HCT116 (cell line): ENCODE measurements at regions of chrX and their contacts with region 1.

Region 1: GRCh38 chrX:123779908-123780396 is 47.1 kb upstream of the THOC2 start:
- DNase-seq: no peak
- ATAC-seq: no peak
- H3K4me3 ChIP-seq: no peak overlapping the region
- H3K27ac ChIP-seq: no peak overlapping the region
- H3K4me1 ChIP-seq: peaks cover 2 to 17% of the 10 kb centered on the region in 2 experiments; a peak in 3 of 4 replicates
- H3K27me3 ChIP-seq: no peaks in the 10 kb centered on the region
- CTCF ChIP-seq: no peak
- POLR2A ChIP-seq: no peak
- RAD21 ChIP-seq: no peak

Region 2: GRCh38 chrX:123698979-123699520 is 80.9 kb before region 1 on chrX:
- CTCF ChIA-PET with region 1: no interaction called
- POLR2A ChIA-PET with region 1: no interaction called
- RAD21 ChIA-PET with region 1: no interaction called
- intact Hi-C with region 1: no loop called
- DNase-seq: no peak
- ATAC-seq: no peak
- H3K4me3 ChIP-seq: no peak overlapping the region
- H3K27ac ChIP-seq: no peak overlapping the region
- H3K4me1 ChIP-seq: no peaks in the 10 kb centered on the region
- H3K27me3 ChIP-seq: no peaks in the 10 kb centered on the region
- CTCF ChIP-seq: no peak
- POLR2A ChIP-seq: no peak
- RAD21 ChIP-seq: no peak

Region 3: GRCh38 chrX:123764967-123765871 is 14.7 kb before region 1 on chrX:
- CTCF ChIA-PET with region 1: interaction called, 21 read pairs
- POLR2A ChIA-PET with region 1: interaction called, 3 read pairs
- RAD21 ChIA-PET with region 1: no interaction called
- intact Hi-C with region 1: no loop called
- DNase-seq: peak; percentile 57
- ATAC-seq: peak; percentile 99
- H3K4me3 ChIP-seq: peak overlapping the region; percentile 49 to 58
- H3K27ac ChIP-seq: peak overlapping the region; percentile 51
- H3K4me1 ChIP-seq: no peaks in the 10 kb centered on the region
- H3K27me3 ChIP-seq: no peaks in the 10 kb centered on the region
- CTCF ChIP-seq: no peak
- POLR2A ChIP-seq: no peak
- RAD21 ChIP-seq: no peak